ENCODE measurements at regions of chr9 and their contacts with region 1.

Region 1: DNA sequence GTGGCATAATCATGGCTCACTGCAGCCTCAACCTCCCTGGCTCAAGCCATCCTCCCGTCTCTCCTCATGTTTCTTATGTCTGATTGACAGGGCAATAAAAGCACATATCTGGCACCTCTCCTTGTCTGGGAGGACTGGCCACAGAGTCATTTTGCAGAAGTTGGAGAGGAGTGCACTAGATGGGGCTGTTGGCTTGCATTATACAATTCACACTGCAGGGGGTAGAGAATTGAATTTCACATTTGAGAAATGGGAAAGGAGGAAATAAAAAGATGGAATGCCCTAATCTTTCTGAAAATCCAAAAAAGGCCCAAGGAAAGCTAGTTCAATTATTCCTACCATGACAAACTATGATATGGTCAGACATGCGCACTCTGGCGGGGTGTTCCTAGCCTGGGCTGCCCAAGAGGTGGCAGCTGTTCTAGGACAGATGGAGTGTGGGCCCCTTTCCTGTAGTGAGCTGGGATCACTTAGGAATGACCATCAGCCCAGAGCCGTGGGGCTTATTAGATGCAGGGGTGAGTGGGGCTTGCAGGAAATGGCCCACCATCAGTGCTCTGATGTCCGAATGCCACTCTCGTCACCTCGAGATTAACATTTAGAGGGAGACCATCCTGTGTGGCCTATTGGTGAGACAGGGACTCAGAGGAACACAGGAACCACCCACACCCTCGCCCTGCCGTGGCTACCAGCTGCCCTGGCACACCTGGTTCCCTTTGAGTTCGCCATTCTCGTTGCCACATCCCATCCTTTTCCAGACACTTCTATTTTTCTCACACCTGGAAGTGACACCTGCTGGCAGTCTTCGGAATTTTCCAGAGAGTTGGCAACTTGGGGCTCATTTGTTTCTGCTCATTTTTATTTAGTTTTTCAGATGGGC is 21.8 kb upstream of the ANKRD18A start:
- DNase-seq: peak in 1 of 2 experiments; percentile 72
- H3K4me3 ChIP-seq: no peak overlapping the region
- H3K27ac ChIP-seq: no peak overlapping the region
- H3K4me1 ChIP-seq: peaks cover 3 to 6% (median 4%) of the 10 kb centered on the region in 4 experiments; a peak in 5 of 7 replicates
- H3K27me3 ChIP-seq: no peaks in the 10 kb centered on the region
- CTCF ChIP-seq: peak; percentile 28 to 65 (median 58)
- EP300 ChIP-seq: no peak
- POLR2A ChIP-seq: no peak
- RAD21 ChIP-seq: peak; percentile 85 to 87

Region 2: GRCh38 chr9:38620483-38621433 is 21.5 kb before region 1 on chr9 and contains the start of gene ANKRD18A:
- CTCF ChIA-PET with region 1: interaction called, 19 read pairs
- POLR2A ChIA-PET with region 1: no interaction called
- DNase-seq: peak; percentile 88 to 94
- H3K4me3 ChIP-seq: peak within 1 kb of the TSS; percentile 55 to 75 (median 62)
- H3K27ac ChIP-seq: no peak within 1 kb of the TSS
- H3K4me1 ChIP-seq: peaks cover 0 to 4% (median 1%) of the 10 kb centered on the region in 4 experiments; a peak in 3 of 7 replicates
- H3K27me3 ChIP-seq: peaks cover 4 to 32% (median 23%) of the 10 kb centered on the region in 4 experiments
- CTCF ChIP-seq: peak; percentile 73 to 75 (median 74)
- EP300 ChIP-seq: 0 out of 3 replicates have a peak, but pooled peaks of 1 of the 2 experiments have one; percentile 13
- POLR2A ChIP-seq: peak; percentile 28 to 62
- RAD21 ChIP-seq: peak; percentile 56 to 74
- total RNA-seq, gene ANKRD18A: 4.0 and 13.2 TPM in 2 replicates

Region 3: GRCh38 chr9:38629511-38629910 is 12.7 kb before region 1 on chr9:
- CTCF ChIA-PET with region 1: interaction called, 15 read pairs
- POLR2A ChIA-PET with region 1: no interaction called
- DNase-seq: no peak
- H3K4me3 ChIP-seq: no peak overlapping the region
- H3K27ac ChIP-seq: no peak overlapping the region
- H3K4me1 ChIP-seq: no peaks in the 10 kb centered on the region
- H3K27me3 ChIP-seq: no peaks in the 10 kb centered on the region
- CTCF ChIP-seq: no peak
- EP300 ChIP-seq: no peak
- POLR2A ChIP-seq: no peak
- RAD21 ChIP-seq: no peak

Region 4: DNA sequence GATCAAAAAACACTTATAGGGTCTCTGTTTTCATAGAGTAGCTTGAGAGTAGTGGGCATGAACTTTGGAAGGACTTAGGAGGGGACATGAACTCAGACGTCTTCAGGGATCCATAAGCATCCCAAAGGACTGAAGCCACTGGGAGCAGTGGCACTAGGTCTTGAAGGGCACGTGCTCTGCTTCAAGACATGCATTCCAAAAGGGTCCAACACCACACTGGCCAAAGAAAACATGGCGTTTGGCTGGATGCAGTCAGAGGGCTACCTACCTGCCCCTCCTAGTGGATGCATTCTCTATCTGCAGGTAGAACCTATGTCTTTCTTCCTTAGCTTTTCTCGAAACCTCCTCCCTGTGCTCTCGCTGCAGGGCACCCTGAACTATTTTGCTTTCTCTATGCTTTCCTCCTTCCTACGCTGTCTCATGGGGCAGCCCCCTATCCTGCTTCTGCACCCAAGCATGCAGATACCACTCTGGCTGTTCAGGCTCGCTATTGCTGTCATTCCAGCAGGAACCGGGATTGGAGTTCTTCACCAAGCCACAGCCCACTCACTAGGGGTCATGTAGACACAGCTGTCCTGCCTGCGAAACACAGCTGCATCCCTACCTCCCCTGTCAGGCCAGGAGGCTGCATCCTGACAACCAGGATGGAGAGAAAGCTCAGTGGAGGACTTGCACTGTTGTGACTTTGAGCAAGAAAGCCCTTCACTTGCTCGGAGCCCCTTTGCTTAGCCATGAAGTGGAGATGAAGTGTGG is 65.8 kb after region 1 on chr9:
- CTCF ChIA-PET with region 1: interaction called, 53 read pairs
- POLR2A ChIA-PET with region 1: no interaction called
- DNase-seq: no peak
- H3K4me3 ChIP-seq: no peak overlapping the region
- H3K27ac ChIP-seq: no peak overlapping the region
- H3K4me1 ChIP-seq: no peaks in the 10 kb centered on the region
- H3K27me3 ChIP-seq: no peaks in the 10 kb centered on the region; a peak in 1 of 7 replicates
- CTCF ChIP-seq: peak; percentile 50 to 90 (median 59)
- EP300 ChIP-seq: no peak
- POLR2A ChIP-seq: no peak
- RAD21 ChIP-seq: peak; percentile 75 to 83

Region 5: DNA sequence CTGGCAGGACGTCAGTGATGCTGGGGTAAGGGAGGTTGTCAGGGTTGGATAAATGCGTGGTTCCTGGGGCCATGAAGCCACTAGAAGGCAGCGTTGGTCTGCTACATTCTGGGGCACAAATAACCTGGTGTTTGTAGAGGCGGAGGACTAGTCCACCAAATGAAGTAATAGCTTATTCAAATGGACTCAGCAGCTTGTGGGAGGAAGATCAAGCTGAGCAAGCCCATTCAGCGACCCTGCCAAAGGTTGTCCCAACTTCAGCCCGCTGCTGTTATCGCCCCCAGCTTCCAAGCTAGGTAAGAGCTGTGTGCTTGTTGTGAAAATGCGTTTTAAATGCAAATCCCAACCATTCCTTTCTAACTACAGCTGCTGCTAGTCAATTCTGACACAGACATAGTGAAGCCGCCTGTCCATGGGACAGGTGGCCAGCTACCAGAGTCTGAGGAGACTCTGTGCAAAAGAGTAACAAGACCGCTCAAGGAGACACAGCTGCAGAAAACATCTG is 85.3 kb after region 1 on chr9:
- CTCF ChIA-PET with region 1: interaction called, 10 read pairs
- POLR2A ChIA-PET with region 1: no interaction called
- DNase-seq: peak; percentile 52 to 77
- H3K4me3 ChIP-seq: no peak overlapping the region; a peak in 1 of 8 replicates
- H3K27ac ChIP-seq: no peak overlapping the region
- H3K4me1 ChIP-seq: 0 out of 7 replicates have a peak, but pooled peaks cover 0 to 5% (median under 1%) of the 10 kb centered on the region in 4 experiments
- H3K27me3 ChIP-seq: no peaks in the 10 kb centered on the region
- CTCF ChIP-seq: peak; percentile 75 to 86 (median 80)
- EP300 ChIP-seq: no peak
- POLR2A ChIP-seq: no peak
- RAD21 ChIP-seq: peak; percentile 91 to 93

Region 6: DNA sequence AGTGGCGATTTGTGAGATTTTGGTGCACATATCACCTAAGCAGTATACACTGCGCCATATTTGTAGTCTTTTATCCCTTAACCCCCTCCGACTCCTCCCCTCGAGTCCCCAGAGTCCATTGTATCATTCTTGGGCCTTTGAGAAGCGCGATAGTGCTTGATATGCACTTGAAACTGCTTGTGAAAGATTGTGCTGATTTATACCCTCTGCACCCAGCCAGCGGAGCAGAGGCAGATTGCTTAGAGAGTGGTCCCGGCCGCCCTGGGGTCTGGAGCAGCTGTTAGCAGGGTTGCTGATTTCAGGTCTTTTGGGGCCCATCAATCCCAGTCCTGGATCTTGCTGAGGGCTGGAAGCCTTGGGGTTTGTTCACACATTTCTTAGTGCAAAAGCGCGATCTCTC is 90.7 kb after region 1 on chr9:
- CTCF ChIA-PET with region 1: interaction called, 10 read pairs
- POLR2A ChIA-PET with region 1: no interaction called
- DNase-seq: no peak
- H3K4me3 ChIP-seq: no peak overlapping the region
- H3K27ac ChIP-seq: no peak overlapping the region
- H3K4me1 ChIP-seq: 0 out of 7 replicates have a peak, but pooled peaks cover 0 to 1% (median 0%) of the 10 kb centered on the region in 4 experiments
- H3K27me3 ChIP-seq: no peaks in the 10 kb centered on the region
- CTCF ChIP-seq: no peak
- EP300 ChIP-seq: no peak
- POLR2A ChIP-seq: no peak
- RAD21 ChIP-seq: no peak